ENCODE measurements at regions of chr2 and their contacts with region 1.

Region 1: GRCh38 chr2:9003616-9004337 is at the start of gene MBOAT2:
- DNase-seq: peak; percentile 95
- H3K4me3 Mint-ChIP-seq: peak within 1 kb of the TSS; percentile 76
- H3K27ac Mint-ChIP-seq: peak within 1 kb of the TSS; percentile 58
- H3K4me1 Mint-ChIP-seq: peaks cover 14% of the 10 kb centered on the region
- H3K27me3 Mint-ChIP-seq: peaks cover 23% of the 10 kb centered on the region
- total RNA-seq, gene MBOAT2: 5.0 and 5.3 TPM in 2 replicates

Region 2: GRCh38 chr2:8189316-8189715 is 814.5 kb before region 1 on chr2:
- intact Hi-C with region 1: no loop called
- DNase-seq: no peak
- H3K4me3 Mint-ChIP-seq: no peak overlapping the region
- H3K27ac Mint-ChIP-seq: no peak overlapping the region
- H3K4me1 Mint-ChIP-seq: no peaks in the 10 kb centered on the region
- H3K27me3 Mint-ChIP-seq: peaks cover 17% of the 10 kb centered on the region

Region 3: GRCh38 chr2:8836971-8837794 is 166.6 kb before region 1 on chr2 and contains the start of gene KIDINS220:
- intact Hi-C with region 1: loop called (anchors 5 kb)
- DNase-seq: peak; percentile 93
- H3K4me3 Mint-ChIP-seq: peak within 1 kb of the TSS; percentile 95
- H3K27ac Mint-ChIP-seq: peak within 1 kb of the TSS; percentile 94
- H3K4me1 Mint-ChIP-seq: peaks cover 19% of the 10 kb centered on the region
- H3K27me3 Mint-ChIP-seq: no peaks in the 10 kb centered on the region
- total RNA-seq, gene KIDINS220: 25.3 and 28.0 TPM in 2 replicates